AG04449 (cell line): ENCODE measurements at regions of chr10 and their contacts with region 1.

Region 1: GRCh38 chr10:132354356-132355094 is 22.5 kb downstream of the LRRC27 start:
- DNase-seq: no peak
- H3K4me3 ChIP-seq: no peak overlapping the region
- CTCF ChIP-seq: no peak

Region 2: DNA sequence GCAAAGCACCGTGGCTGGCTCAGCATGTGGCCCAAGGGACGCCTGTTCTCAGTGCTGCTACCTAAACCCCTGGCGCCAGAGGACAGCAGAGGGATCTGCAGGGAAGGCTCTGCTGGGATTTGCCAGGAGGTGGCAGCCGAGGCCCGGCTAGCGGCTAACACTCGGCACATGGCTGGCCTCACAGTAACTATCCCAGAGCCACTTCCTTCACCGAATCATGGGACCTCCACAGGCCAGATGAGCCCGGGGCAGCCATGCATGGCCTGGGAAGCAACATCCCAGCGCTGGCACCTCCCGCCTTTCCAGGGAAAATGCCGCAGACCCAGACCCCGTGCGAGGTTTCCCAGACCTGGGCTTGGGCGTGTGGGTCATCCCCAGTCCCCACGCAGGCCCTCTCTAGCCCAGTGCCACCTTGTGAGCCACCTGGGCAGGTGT is 131.4 kb before region 1 on chr10:
- CTCF ChIA-PET with region 1: interaction called, 49 read pairs
- POLR2A ChIA-PET with region 1: no interaction called
- DNase-seq: peak; percentile 7
- H3K4me3 ChIP-seq: no peak overlapping the region
- CTCF ChIP-seq: peak; percentile 99

Region 3: GRCh38 chr10:132335189-132336063 is 19.1 kb before region 1 on chr10:
- CTCF ChIA-PET with region 1: interaction called, 12 read pairs
- POLR2A ChIA-PET with region 1: no interaction called
- DNase-seq: no peak
- H3K4me3 ChIP-seq: no peak overlapping the region
- CTCF ChIP-seq: no peak

Region 4: GRCh38 chr10:132341781-132342180 is 12.7 kb before region 1 on chr10:
- CTCF ChIA-PET with region 1: interaction called, 20 read pairs
- POLR2A ChIA-PET with region 1: no interaction called
- DNase-seq: no peak
- H3K4me3 ChIP-seq: no peak overlapping the region
- CTCF ChIP-seq: no peak

Region 5: DNA sequence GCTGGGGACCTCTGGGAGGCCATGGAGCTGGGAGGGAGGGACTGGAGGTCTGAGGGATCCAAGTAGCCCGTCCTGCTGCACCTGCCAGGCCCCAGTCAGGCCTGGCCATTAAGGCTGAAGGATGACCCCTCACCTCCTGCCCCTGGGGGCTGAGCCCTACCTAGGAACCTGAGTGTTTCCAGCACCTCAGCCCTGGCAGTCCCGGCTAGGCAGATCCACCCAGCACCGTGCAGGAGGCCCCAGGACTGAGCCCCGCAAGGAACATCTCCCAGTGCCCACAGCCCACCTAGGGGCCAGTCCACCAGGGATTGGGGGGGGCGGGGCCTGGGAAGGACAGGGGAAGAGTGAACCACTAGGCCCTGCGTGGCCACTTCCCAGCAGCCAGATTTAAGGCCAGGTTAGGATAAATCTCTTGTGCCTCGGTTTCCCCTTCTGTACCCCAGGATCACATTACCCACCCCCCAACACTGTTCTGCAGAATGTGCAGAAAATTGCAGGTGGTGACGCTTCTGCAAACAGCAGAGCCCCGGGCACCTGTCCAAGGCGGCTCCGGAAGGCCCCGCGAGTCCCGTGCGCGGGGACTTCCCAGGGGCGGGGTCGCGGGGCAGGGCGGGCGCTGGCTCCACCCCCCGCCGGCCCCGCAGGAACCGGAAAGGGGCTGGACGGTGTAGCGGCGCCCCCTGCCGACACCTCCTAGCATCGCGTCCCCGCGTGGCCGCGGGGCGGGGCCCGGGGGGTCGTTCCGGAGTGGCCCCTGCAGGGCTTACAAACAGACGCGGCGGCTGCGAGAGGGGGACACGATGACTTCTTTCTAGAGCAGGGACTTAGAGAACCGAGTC is 98.3 kb after region 1 on chr10:
- CTCF ChIA-PET with region 1: interaction called, 17 read pairs
- POLR2A ChIA-PET with region 1: no interaction called
- DNase-seq: no peak
- H3K4me3 ChIP-seq: no peak overlapping the region; the same call in 1 of the 2 replicates
- CTCF ChIP-seq: peak; percentile 93